K562 (cell line): ENCODE measurements at regions of chr9 and their contacts with region 1.

Region 1: GRCh38 chr9:33737811-33738606 is 57.4 kb upstream of the PRSS3 start:
- DNase-seq: peak; percentile 16 to 56 (median 26)
- ATAC-seq: peak; percentile 90
- H3K4me3 ChIP-seq: no peak overlapping the region
- H3K27ac ChIP-seq: no peak overlapping the region
- H3K4me1 ChIP-seq: peaks cover 0 to 5% of the 10 kb centered on the region in 2 experiments; a peak in 3 of 5 replicates
- H3K27me3 ChIP-seq: no peaks in the 10 kb centered on the region
- CTCF ChIP-seq: peak; percentile 54 to 85 (median 61)
- EP300 ChIP-seq: no peak
- POLR2A ChIP-seq: no peak
- RAD21 ChIP-seq: peak in 1 of 2 experiments; percentile 60; a peak in 2 of 4 replicates

Region 2: DNA sequence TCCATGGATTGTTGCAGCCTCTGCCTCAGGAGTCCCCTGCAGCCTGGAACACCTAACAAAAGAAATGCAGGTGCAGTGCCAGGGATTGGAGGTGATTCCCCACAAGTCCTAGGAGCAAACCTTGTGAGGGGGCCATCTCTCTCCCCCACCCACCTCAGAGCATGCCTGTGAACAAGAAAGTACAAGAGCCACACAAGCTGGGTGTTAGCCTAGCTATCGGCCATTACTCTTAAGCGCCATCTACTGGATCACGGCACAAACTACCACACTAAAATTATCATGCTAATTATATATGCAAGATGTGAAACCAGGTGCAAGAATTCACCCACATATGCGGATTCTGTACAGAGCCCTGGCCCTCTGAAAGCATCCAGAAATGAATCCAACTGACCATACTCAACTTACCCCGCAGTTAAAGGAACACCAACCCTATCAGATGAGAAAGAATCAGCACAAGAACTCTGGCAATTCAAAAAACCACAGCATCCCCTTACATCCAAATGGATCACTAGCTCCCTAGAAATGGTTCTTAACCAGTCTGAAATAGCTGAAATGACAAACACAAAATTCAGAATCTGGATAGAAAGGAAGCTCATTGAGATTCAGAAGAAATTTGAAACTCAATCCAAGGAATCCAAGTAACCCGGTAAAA is 40.8 kb after region 1 on chr9:
- CTCF ChIA-PET with region 1: interaction called, 3 read pairs
- POLR2A ChIA-PET with region 1: no interaction called
- in situ Hi-C with region 1: no loop called
- intact Hi-C with region 1: loop called (anchors 1 kb)
- DNase-seq: peak; percentile 31 to 77 (median 48)
- ATAC-seq: peak; percentile 88
- H3K4me3 ChIP-seq: no peak overlapping the region
- H3K27ac ChIP-seq: no peak overlapping the region
- H3K4me1 ChIP-seq: no peaks in the 10 kb centered on the region; a peak in 1 of 5 replicates
- H3K27me3 ChIP-seq: no peaks in the 10 kb centered on the region
- CTCF ChIP-seq: peak; percentile 64 to 78 (median 77)
- EP300 ChIP-seq: no peak
- POLR2A ChIP-seq: no peak
- RAD21 ChIP-seq: peak; percentile 26 to 61; a peak in 3 of 4 replicates

Region 3: DNA sequence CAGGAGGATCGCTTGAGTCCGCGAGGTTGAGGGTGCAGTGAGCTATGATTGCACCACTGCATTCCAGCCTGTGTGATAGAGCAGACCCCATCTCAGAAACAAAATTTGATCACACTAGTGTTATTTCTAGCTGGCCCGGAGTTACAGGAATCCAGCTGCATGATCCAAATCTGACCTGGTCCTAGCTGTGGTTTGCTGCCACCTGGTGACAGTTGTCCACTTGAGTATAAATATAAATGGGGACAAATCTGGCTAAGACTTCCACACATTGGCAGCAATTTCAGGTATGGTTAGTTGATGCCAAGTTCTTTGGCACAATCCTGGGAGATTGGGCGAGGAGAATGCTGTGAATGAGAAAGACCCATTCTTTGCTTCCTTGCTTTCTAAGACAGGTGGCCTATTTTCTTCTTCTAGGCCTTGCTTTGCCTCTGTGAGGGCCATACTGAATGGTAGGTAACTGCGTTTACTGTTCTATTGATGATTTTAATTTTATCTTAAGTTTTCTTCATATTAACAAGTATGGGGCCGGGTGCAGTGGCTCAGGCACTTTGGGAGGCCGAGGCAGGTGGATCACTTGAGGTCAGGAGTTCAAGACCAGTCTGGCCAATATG is 114.3 kb after region 1 on chr9:
- CTCF ChIA-PET with region 1: interaction called, 5 read pairs
- POLR2A ChIA-PET with region 1: no interaction called
- in situ Hi-C with region 1: loop called (anchors 5 kb)
- intact Hi-C with region 1: loop called (anchors 1 kb)
- DNase-seq: peak in 2 of 4 experiments; percentile 19 to 54
- ATAC-seq: peak; percentile 79
- H3K4me3 ChIP-seq: no peak overlapping the region
- H3K27ac ChIP-seq: no peak overlapping the region
- H3K4me1 ChIP-seq: peaks cover 0 to 2% of the 10 kb centered on the region in 2 experiments; a peak in 2 of 5 replicates
- H3K27me3 ChIP-seq: no peaks in the 10 kb centered on the region
- CTCF ChIP-seq: peak; percentile 49 to 75 (median 68)
- EP300 ChIP-seq: no peak
- POLR2A ChIP-seq: no peak
- RAD21 ChIP-seq: peak; percentile 53 to 68

Region 4: GRCh38 chr9:33924978-33925797 is 187.2 kb after region 1 on chr9:
- CTCF ChIA-PET with region 1: no interaction called
- POLR2A ChIA-PET with region 1: no interaction called
- in situ Hi-C with region 1: no loop called
- intact Hi-C with region 1: loop called (anchors 10 kb)
- DNase-seq: peak in 2 of 4 experiments; percentile 30 to 50
- ATAC-seq: peak; percentile 72
- H3K4me3 ChIP-seq: no peak overlapping the region
- H3K27ac ChIP-seq: no peak overlapping the region
- H3K4me1 ChIP-seq: no peaks in the 10 kb centered on the region
- H3K27me3 ChIP-seq: no peaks in the 10 kb centered on the region
- CTCF ChIP-seq: peak; percentile 41 to 50 (median 46); a peak in 5 of 6 replicates
- EP300 ChIP-seq: no peak
- POLR2A ChIP-seq: no peak
- RAD21 ChIP-seq: peak in 1 of 2 experiments; percentile 43; a peak in 2 of 4 replicates